ENCODE measurements at regions of chr1 and their contacts with region 1.

Region 1: GRCh38 chr1:19661721-19662228 is 2.9 kb upstream of the HTR6 start:
- DNase-seq: peak in 1 of 2 experiments; percentile 35
- ATAC-seq: no peak
- H3K4me3 ChIP-seq: no peak overlapping the region
- H3K27ac ChIP-seq: no peak overlapping the region
- H3K4me1 ChIP-seq: peaks cover 7% of the 10 kb centered on the region; the same call in 1 of the 3 replicates
- CTCF ChIP-seq: peak; percentile 76
- EP300 ChIP-seq: no peak
- POLR2A ChIP-seq: no peak
- RAD21 ChIP-seq: peak; percentile 62 to 64

Region 2: DNA sequence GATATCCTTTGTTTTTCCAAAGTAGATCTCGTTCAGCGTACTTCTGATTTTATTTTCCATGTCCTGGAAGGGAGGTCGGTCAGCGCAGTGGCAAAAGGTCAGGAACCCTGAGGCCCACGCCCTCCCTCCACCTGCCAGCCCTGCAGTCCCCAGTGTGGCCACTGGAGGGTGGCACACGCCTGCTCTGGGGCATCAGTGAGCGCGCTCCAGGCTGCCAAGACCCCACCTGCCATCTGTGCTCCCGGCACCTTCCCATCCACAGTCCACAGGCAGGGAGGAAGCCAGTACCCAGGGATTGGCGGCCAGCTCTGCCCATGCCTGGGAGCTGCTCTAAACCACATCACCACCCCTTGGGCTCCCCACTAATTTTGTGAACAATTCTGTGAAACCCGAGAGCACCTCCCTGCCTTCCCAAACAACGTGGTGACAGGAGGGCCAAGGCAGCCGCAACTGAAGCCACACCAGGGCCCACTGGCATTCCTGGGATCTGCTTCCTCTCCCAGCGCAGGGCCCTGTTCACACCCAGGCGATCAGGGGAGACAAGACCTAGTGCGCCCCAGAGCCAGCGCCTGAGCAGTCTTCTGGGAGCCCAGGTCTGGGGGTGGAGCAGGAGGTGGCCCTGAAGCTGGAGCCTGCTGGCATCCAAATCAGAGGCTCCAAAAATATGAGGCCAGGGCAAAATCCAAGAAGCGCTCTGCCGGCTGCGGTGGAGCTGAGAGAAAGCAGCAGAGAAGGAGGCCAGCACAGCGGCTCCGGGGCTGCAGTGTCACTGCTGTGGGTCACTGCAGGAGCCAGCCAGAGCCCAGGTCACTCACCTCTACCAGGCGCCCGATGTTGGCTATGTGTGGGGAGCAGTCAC is 317.2 kb before region 1 on chr1:
- CTCF ChIA-PET with region 1: interaction called, 12 read pairs
- POLR2A ChIA-PET with region 1: no interaction called
- DNase-seq: peak; percentile 31 to 44
- ATAC-seq: peak; percentile 82 to 86
- H3K4me3 ChIP-seq: no peak overlapping the region
- H3K27ac ChIP-seq: no peak overlapping the region
- H3K4me1 ChIP-seq: no peaks in the 10 kb centered on the region
- CTCF ChIP-seq: peak; percentile 57
- EP300 ChIP-seq: no peak
- POLR2A ChIP-seq: no peak
- RAD21 ChIP-seq: peak; percentile 71 to 73

Region 3: GRCh38 chr1:19676438-19676922 is 14.7 kb after region 1 on chr1:
- CTCF ChIA-PET with region 1: interaction called, 13 read pairs
- POLR2A ChIA-PET with region 1: no interaction called
- DNase-seq: peak in 1 of 2 experiments; percentile 28
- ATAC-seq: peak in 1 of 2 experiments; percentile 64; a peak in 3 of 6 replicates
- H3K4me3 ChIP-seq: no peak overlapping the region
- H3K27ac ChIP-seq: no peak overlapping the region
- H3K4me1 ChIP-seq: no peaks in the 10 kb centered on the region
- CTCF ChIP-seq: no peak
- EP300 ChIP-seq: no peak
- POLR2A ChIP-seq: no peak
- RAD21 ChIP-seq: no peak